ENCODE measurements at regions of chr19 and their contacts with region 1.

Region 1: DNA sequence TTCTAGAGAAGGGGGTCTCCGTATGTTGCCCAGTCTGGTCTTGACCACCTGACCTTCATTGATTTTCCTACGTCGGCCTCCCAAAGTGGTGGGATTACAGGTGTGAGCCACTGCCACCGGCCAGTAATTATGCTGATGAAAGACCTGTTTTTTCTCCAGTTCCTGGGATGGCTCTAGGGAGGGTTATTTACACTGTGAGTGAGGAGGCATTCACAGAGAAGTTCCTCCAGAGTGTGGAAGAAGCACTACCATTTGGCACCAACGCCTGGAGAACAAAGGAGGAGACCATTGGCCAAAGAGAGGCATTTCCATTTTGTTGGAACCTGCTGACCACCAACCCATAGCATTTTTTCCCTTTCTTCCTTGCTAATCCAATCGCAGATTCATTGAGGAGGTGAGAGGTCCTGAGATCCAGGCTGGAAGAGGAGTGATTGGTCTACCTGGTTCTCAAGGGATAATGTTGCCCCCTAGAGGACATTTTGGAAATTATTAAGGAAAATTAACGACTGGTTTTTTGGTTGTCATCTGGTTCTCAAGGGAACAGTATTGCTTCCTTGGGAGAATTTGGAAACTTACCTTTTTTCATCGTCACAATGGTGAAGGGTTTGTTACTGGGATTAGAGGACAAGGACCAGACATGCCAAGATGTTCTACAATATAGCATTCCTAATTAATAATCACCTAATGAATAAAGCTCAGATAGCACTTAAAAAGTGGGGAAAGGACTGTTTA is 5.5 kb upstream of the SAE1 start:
- DNase-seq: no peak
- H3K4me3 Mint-ChIP-seq: no peak overlapping the region
- H3K27ac Mint-ChIP-seq: no peak overlapping the region
- H3K4me1 Mint-ChIP-seq: peaks cover 5% of the 10 kb centered on the region
- H3K27me3 Mint-ChIP-seq: no peaks in the 10 kb centered on the region

Region 2: DNA sequence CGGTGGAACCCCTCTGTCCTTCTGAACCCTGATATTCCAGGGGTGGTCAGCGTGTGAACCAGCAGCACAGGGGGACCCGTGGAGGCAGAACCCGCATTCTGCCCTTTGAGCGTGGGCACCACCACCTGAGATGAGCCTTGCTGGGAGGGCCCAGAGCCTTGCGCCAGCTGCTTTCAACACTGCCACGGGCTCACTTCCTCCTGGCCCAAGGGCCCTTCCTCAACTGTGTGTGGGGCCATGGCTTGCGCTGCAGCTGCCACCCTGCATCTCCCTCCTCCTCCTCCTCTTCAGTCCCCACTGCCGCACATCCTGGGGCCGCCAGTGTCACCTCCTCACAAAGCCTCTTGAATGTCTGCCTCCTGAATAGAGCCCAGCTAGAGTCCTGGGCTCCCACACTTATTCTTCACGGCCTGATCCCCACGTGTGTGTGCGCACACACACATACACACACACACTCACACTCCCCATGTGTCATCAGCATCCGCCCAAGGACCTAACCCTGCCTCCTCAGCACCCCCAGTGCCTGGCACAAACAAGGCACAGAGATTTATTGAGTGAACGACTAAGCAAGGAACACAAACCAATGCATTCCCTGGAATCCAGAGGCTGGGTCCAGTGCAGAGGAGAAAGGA is 49.8 kb before region 1 on chr19:
- CTCF ChIA-PET with region 1: interaction called, 25 read pairs
- intact Hi-C with region 1: loop called (anchors 1 kb)
- DNase-seq: no peak
- H3K4me3 Mint-ChIP-seq: no peak overlapping the region
- H3K27ac Mint-ChIP-seq: no peak overlapping the region
- H3K4me1 Mint-ChIP-seq: peaks cover 3% of the 10 kb centered on the region
- H3K27me3 Mint-ChIP-seq: no peaks in the 10 kb centered on the region

Region 3: GRCh38 chr19:47253467-47253881 is 128.4 kb after region 1 on chr19:
- CTCF ChIA-PET with region 1: no interaction called
- intact Hi-C with region 1: no loop called
- DNase-seq: no peak
- H3K4me3 Mint-ChIP-seq: no peak overlapping the region
- H3K27ac Mint-ChIP-seq: no peak overlapping the region
- H3K4me1 Mint-ChIP-seq: peaks cover 16% of the 10 kb centered on the region
- H3K27me3 Mint-ChIP-seq: no peaks in the 10 kb centered on the region